ENCODE measurements at regions of chr2 and their contacts with region 1.

Region 1: DNA sequence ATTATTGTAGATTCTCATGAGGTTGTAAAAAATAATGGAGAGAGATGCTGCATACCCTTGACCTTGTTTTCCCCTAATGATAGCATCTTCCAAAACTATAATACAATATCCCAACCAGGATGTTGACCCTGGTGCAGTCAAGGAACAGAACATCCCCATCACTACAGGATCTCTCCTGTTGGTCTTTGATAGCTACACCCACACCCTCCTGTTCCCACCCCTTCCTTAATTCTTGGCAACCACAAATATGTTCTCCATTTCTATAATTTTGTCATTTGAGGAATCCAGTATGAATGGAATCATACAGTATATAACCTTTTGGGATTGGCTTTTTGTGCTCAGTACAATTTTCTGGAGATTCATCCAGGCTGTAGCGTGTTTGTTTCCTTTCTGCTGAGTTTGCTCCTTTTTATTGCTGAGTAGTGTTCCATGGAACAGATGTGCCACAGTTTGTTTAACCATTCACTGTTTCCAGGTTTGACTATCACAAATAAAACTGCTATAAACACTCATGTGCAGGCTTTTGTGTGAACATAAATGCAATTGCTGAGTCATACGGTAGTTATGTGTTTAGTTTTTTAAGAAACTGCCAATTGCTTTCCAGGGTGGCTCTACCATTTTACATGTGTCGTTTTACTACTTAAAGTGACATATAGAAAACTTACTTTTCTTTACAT is 22.2 kb downstream of the MCFD2 start:
- DNase-seq: no peak
- H3K4me3 ChIP-seq: no peak overlapping the region
- H3K27ac ChIP-seq: no peak overlapping the region
- H3K4me1 ChIP-seq: no peaks in the 10 kb centered on the region
- H3K27me3 ChIP-seq: no peaks in the 10 kb centered on the region
- CTCF ChIP-seq: no peak
- EP300 ChIP-seq: no peak
- POLR2A ChIP-seq: no peak

Region 2: GRCh38 chr2:46469116-46469515 is 424.3 kb before region 1 on chr2:
- intact Hi-C with region 1: loop called in 2 of 4 experiments (anchors 5 kb)
- DNase-seq: no peak
- H3K4me3 ChIP-seq: no peak overlapping the region
- H3K27ac ChIP-seq: no peak overlapping the region
- H3K4me1 ChIP-seq: no peaks in the 10 kb centered on the region
- H3K27me3 ChIP-seq: no peaks in the 10 kb centered on the region
- CTCF ChIP-seq: no peak
- EP300 ChIP-seq: no peak
- POLR2A ChIP-seq: no peak

Region 3: GRCh38 chr2:46589358-46589757 is 304.0 kb before region 1 on chr2:
- intact Hi-C with region 1: no loop called
- DNase-seq: no peak
- H3K4me3 ChIP-seq: no peak overlapping the region
- H3K27ac ChIP-seq: no peak overlapping the region
- H3K4me1 ChIP-seq: no peaks in the 10 kb centered on the region
- H3K27me3 ChIP-seq: no peaks in the 10 kb centered on the region
- CTCF ChIP-seq: no peak
- EP300 ChIP-seq: no peak
- POLR2A ChIP-seq: no peak

Region 4: GRCh38 chr2:46942139-46942517 is 48.7 kb after region 1 on chr2:
- intact Hi-C with region 1: no loop called
- DNase-seq: peak in 2 of 5 donors; percentile 44 to 48
- H3K4me3 ChIP-seq: peak overlapping the region; percentile 61
- H3K27ac ChIP-seq: no peak overlapping the region
- H3K4me1 ChIP-seq: no peaks in the 10 kb centered on the region
- H3K27me3 ChIP-seq: no peaks in the 10 kb centered on the region
- CTCF ChIP-seq: no peak
- EP300 ChIP-seq: no peak
- POLR2A ChIP-seq: no peak

Measured in ovary (tissue), 10 donors.